ENCODE measurements at regions of chr15 and their contacts with region 1.

Region 1: DNA sequence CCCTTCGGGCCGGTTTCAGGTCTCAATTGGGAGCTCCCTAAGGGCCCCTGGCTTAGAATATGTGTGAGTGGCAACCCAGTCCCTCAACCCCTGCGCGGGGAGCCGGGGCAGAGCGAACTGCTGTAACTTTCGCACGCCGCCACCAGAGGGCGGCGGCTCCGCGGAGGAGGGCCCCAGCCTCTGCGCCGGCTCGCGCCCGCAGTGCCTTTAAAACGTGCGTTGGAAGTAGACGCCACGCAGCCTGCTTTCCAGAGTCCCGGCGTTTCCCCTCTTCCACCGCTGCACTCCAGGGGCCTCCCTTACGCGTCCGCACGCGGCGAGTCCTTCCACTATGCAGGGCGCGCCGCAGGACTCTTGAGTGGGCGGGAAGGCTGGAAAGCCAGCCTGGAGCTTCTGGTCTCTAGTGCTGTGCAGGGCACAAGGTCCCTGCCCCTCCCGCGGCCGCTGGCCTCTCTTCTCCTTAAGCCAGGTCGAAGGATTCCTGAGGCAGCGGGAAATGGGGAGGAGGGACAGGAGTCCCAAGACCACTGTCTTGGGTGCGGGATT is 23.7 kb upstream of the RNU6-1 start:
- DNase-seq: peak; percentile 72 to 83
- ATAC-seq: peak; percentile 97 to 98 (median 98)
- H3K4me3 ChIP-seq: peak overlapping the region in 9 of 10 donors; percentile 32 to 57 (median 51)
- H3K27ac ChIP-seq: peak overlapping the region in 4 of 10 donors; percentile 26 to 42 (median 32)
- H3K4me1 ChIP-seq: peaks cover 2 to 15% (median 11%) of the 10 kb centered on the region in 9 donors
- H3K27me3 ChIP-seq: no peaks in the 10 kb centered on the region
- CTCF ChIP-seq: peak; percentile 81 to 98 (median 97)

Region 2: GRCh38 chr15:67892559-67893377 is 29.3 kb after region 1 on chr15:
- intact Hi-C with region 1: no loop called
- DNase-seq: no peak
- ATAC-seq: no peak
- H3K4me3 ChIP-seq: no peak overlapping the region
- H3K27ac ChIP-seq: no peak overlapping the region
- H3K4me1 ChIP-seq: peaks cover 0 to 7% (median 0%) of the 10 kb centered on the region in 9 donors
- H3K27me3 ChIP-seq: no peaks in the 10 kb centered on the region
- CTCF ChIP-seq: no peak

Region 3: GRCh38 chr15:67937153-67937761 is 73.7 kb after region 1 on chr15:
- intact Hi-C with region 1: loop called in 1 of 10 experiments (anchors 10 kb)
- DNase-seq: no peak
- ATAC-seq: peak in 1 of 8 donors; percentile 26
- H3K4me3 ChIP-seq: no peak overlapping the region
- H3K27ac ChIP-seq: no peak overlapping the region
- H3K4me1 ChIP-seq: peaks cover 0 to 19% (median 0%) of the 10 kb centered on the region in 9 donors
- H3K27me3 ChIP-seq: no peaks in the 10 kb centered on the region
- CTCF ChIP-seq: no peak

Region 4: DNA sequence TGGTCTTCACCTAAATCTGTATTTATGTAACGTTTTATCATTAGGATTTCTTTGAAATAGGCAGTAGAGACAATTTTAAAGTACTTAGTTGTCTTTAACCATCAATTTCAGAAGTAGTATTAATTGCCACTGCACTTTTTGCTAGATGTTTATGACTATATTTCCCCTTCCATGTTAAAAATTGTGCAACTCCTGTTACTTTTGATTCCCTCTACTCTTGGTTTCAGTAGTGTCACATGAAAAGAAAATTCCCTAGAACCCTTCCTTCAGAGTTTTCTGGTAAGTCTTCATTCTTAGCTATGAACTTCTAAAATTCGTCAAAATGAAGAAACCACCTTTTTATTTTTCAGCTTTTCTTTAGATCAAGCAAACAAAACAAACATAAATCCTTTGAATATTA is 197.7 kb after region 1 on chr15:
- intact Hi-C with region 1: loop called in 5 of 10 experiments (anchors 2 to 10 kb)
- DNase-seq: no peak
- ATAC-seq: no peak
- H3K4me3 ChIP-seq: no peak overlapping the region
- H3K27ac ChIP-seq: no peak overlapping the region
- H3K4me1 ChIP-seq: peaks cover 0 to 70% (median 49%) of the 10 kb centered on the region in 9 donors
- H3K27me3 ChIP-seq: no peaks in the 10 kb centered on the region
- CTCF ChIP-seq: no peak

Region 5: DNA sequence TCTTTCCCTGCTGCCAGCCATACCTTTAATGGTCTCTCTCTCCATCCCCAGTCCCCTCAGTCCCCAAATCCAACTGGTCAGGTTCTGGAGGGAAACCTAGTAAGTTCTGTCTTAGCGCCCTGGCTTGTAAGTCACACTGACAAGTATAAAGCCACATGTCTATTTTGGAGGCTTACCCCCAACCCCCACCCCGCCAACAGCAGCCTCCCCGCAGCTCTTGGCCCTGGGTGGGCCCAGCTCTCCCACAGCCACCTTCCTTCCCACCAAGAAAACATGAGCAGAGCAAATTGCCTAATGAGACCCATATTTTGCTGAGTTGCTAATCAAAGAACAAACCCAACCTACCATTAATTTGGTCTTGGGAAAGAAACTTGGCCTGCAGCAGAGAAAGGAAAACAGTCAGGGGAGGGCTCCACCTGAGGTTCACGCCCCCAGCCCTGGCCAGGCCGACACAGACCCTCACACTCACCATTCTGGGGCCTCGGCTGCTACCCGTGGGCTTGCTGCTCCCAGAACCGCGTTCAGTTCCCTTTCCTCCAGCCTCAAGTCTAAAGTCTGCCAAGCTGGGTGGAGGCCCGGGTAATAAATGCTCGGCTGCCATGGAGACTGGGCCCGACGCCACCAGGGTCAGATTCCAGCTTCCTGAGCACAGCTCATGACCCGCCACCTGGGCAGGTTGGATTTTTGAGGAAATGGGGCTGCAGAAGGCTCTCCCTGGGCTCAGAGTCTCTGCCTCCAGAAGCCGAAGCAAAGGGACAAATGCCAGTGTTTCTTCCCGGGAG is 341.5 kb after region 1 on chr15 and contains the start of gene CALML4:
- intact Hi-C with region 1: loop called in 4 of 10 experiments (anchors 5 to 10 kb)
- DNase-seq: peak; percentile 62 to 68
- ATAC-seq: peak; percentile 48 to 79 (median 70)
- H3K4me3 ChIP-seq: peak within 1 kb of the TSS in 7 of 10 donors; percentile 24 to 37 (median 28)
- H3K27ac ChIP-seq: peak within 1 kb of the TSS in 9 of 10 donors; percentile 11 to 90 (median 51)
- H3K4me1 ChIP-seq: peaks cover 2 to 59% (median 33%) of the 10 kb centered on the region in 9 donors
- H3K27me3 ChIP-seq: no peaks in the 10 kb centered on the region
- CTCF ChIP-seq: no peak
- total RNA-seq, gene CALML4: 0.28 to 1.8 (median 0.81) TPM

Region 6: DNA sequence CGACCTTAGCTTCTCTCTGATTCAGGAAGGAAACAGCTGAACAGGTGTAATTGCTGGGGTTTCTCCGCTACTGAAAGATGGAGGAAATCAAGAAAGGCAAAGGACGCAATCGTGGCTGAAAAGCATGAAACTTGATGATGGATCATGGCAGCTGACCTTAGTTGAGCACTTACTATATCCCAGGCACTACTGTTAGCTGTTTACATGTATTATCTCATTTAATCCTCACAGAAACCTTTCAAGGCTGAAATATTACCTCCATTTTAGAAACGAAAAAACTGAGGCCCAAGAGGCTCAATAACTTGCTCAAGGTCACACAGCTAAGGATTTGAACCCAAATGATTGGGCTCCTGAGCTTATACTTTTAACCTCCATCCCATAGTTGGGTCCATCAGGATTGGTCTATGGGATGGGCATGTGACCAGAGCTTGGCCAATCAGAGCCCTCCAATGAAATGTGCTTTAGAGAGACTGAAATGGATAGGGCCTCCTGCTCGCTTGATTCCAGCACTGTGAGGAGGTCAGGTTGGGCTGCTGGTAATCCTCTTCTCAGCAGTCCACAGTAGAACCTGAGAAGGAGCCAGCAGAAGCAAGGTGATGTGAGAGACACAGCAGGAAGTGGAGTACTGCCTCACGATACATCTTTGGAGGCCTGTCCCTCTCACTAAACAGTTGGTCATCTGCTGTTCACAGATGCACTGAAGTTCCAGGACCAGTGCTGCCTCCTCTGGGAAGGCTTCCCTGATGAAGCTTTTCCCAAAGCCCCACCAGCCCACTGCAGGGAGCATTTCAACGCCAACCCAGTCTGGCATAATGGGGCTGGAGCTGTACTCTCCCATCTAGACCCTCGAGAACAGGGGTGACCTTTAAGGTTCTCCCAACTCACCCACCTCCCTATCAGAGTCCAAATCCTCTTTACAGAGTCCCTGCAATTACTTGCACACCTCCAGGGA is 355.6 kb after region 1 on chr15:
- intact Hi-C with region 1: loop called in 4 of 10 experiments (anchors 5 to 10 kb)
- DNase-seq: no peak
- ATAC-seq: no peak
- H3K4me3 ChIP-seq: no peak overlapping the region
- H3K27ac ChIP-seq: no peak overlapping the region
- H3K4me1 ChIP-seq: peaks cover 0 to 22% (median 0%) of the 10 kb centered on the region in 9 donors
- H3K27me3 ChIP-seq: no peaks in the 10 kb centered on the region
- CTCF ChIP-seq: no peak

Measured in heart right ventricle (tissue), 16 donors.